ENCODE measurements at regions of chr17 and their contacts with region 1.

Region 1: DNA sequence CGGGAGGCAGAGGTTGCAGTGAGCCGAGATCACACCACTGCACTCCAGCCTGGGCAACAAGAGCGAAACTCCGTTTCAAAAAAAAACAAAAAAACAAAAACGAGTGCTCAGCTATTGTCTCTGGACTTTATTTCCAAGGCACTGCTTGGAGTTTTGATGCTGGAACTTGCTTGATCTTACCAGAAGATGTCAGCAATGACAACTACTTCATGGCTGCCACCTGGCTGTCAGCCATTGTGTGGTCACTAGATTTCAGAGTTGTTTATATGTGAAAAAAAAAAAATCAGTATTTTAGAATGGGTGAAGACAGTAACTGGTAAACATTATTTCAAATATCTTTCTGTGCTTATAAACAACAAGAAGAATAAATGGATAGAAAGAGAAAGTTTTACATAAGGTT is 26.3 kb upstream of the OR4D1 start:
- DNase-seq: peak in 2 of 10 donors; percentile 14 to 18

Region 2: GRCh38 chr17:58172369-58173071 is 50.6 kb after region 1 on chr17:
- intact Hi-C with region 1: loop called (anchors 5 kb)
- DNase-seq: no peak